ENCODE measurements at regions of chr2 and their contacts with region 1.

Region 1: GRCh38 chr2:215746226-215746886 is 267.0 kb downstream of the MREG start:
- DNase-seq: no peak
- H3K4me3 ChIP-seq: no peak overlapping the region
- H3K27ac ChIP-seq: no peak overlapping the region
- H3K27me3 ChIP-seq: no peaks in the 10 kb centered on the region
- CTCF ChIP-seq: no peak

Region 2: GRCh38 chr2:215410932-215411285 is 335.4 kb before region 1 on chr2:
- CTCF ChIA-PET with region 1: no interaction called
- POLR2A ChIA-PET with region 1: no interaction called
- DNase-seq: peak; percentile 94
- H3K4me3 ChIP-seq: no peak overlapping the region
- H3K27ac ChIP-seq: no peak overlapping the region
- H3K27me3 ChIP-seq: no peaks in the 10 kb centered on the region
- CTCF ChIP-seq: no peak

Region 3: DNA sequence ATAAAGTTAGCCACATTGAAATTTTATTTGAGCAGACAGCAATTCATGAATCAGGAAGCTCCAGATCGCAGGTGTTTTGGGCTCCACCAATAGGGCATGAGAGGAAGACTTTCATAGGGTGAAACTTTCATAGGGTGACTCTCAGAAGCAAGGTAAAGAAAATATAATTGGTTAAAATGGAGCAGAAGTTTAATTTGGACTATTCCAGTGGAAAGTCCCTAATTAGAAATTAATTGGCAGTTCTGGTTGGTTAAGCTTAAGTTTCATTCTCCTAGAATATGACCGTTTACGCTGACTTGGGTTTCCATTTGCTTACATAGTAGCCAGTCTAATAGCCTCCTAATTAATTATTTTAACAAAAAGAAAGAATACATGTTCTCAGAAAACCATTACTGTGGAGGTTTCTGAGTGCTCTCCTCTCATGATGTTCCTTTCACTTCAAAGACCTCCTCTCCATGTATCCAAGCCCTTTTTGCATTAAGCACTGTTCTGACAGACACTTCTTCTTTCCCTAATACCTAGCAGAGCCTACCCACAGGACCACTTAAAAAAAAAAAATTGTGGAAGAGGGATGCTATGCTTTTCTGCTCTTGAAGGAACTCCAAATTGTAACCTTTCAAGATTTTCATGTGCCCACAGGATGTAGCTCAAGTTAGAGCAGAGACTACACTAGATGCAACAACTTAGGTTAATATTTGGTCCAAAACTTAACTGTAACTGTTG is 167.9 kb after region 1 on chr2:
- CTCF ChIA-PET with region 1: no interaction called
- POLR2A ChIA-PET with region 1: interaction called, 10 read pairs
- DNase-seq: no peak
- H3K4me3 ChIP-seq: no peak overlapping the region
- H3K27ac ChIP-seq: no peak overlapping the region
- H3K27me3 ChIP-seq: no peaks in the 10 kb centered on the region
- CTCF ChIP-seq: no peak